ENCODE measurements at regions of chr15 and their contacts with region 1.

Region 1: GRCh38 chr15:60585743-60586708 is 107.1 kb upstream of the ICE2 start:
- DNase-seq: peak; percentile 36
- H3K4me3 ChIP-seq: no peak overlapping the region
- H3K27ac ChIP-seq: no peak overlapping the region
- H3K27me3 ChIP-seq: no peaks in the 10 kb centered on the region
- CTCF ChIP-seq: peak; percentile 94

Region 2: GRCh38 chr15:59879506-59880265 is 706.3 kb before region 1 on chr15:
- CTCF ChIA-PET with region 1: no interaction called
- POLR2A ChIA-PET with region 1: no interaction called
- DNase-seq: no peak
- H3K4me3 ChIP-seq: no peak overlapping the region
- H3K27ac ChIP-seq: no peak overlapping the region
- H3K27me3 ChIP-seq: peaks cover 5% of the 10 kb centered on the region
- CTCF ChIP-seq: no peak

Region 3: DNA sequence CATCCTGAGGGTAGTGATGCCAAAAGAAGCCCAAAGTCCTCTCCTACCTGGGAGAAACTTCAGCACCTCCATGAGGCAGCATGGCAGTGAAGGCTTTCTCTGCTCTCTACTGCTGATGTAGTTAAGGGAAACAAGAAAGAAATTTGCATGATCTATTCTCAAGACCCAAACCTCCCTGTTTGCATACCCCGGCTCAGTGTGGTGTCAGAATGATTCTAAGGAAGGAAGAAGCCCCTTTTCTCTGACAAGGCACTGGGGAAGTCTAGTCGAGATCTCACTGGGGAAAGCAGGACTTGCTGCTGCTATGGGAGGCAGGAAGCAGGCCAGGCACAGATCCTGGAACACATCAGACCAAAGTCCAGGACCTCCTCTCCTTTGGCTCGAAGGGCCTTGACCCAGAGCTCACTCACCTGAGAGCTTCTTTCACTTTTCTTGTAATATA is 17.7 kb before region 1 on chr15:
- CTCF ChIA-PET with region 1: interaction called, 17 read pairs
- POLR2A ChIA-PET with region 1: no interaction called
- DNase-seq: no peak
- H3K4me3 ChIP-seq: no peak overlapping the region
- H3K27ac ChIP-seq: no peak overlapping the region
- H3K27me3 ChIP-seq: no peaks in the 10 kb centered on the region
- CTCF ChIP-seq: no peak

Region 4: GRCh38 chr15:60635507-60636352 is 49.7 kb after region 1 on chr15:
- CTCF ChIA-PET with region 1: no interaction called
- POLR2A ChIA-PET with region 1: no interaction called
- DNase-seq: no peak
- H3K4me3 ChIP-seq: no peak overlapping the region
- H3K27ac ChIP-seq: no peak overlapping the region
- H3K27me3 ChIP-seq: peaks cover 4% of the 10 kb centered on the region
- CTCF ChIP-seq: no peak

Region 5: DNA sequence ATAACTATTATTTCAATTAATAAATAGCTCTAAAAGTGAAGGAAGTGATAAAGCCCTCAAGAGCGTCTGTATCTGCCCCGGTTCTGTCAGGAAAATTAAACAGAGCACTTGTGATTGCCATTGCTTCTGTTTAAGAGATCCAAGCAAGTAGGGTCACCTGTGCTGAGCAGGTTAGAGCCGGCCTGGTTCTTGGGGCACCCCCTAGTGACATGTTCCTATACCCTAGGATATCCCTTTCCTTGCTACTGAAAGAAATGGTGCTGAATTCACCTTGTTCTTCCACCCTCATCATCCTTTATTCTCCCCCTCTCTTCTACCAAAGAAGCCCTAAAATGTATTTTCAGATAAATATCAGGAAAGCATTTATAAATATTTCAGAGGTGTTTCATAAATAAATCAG is 319.6 kb after region 1 on chr15:
- CTCF ChIA-PET with region 1: interaction called, 11 read pairs
- POLR2A ChIA-PET with region 1: no interaction called
- DNase-seq: no peak
- H3K4me3 ChIP-seq: no peak overlapping the region
- H3K27ac ChIP-seq: no peak overlapping the region
- H3K27me3 ChIP-seq: peaks cover 5% of the 10 kb centered on the region
- CTCF ChIP-seq: 0 out of 2 replicates have a peak, but pooled peaks have one; percentile 8

Region 6: DNA sequence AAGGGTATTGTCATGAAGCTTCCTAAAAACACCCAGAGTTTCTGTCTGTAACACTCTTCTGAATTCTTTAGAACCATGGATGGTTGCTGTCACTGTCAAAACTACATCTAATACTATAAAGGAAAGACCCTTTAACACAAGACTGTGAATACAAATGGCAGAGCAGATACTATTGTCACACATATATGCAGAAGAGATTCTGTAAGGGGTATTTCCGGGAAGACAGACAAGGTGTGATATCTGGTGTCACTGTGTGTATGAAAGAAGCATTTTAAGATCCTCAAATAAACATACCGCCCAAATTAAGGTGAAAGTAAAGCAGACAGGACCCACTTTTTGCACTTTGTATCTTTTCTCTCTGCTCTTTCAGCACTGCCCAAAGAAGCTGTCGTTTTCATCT is 336.7 kb after region 1 on chr15:
- CTCF ChIA-PET with region 1: interaction called, 203 read pairs
- POLR2A ChIA-PET with region 1: no interaction called
- DNase-seq: no peak
- H3K4me3 ChIP-seq: no peak overlapping the region
- H3K27ac ChIP-seq: no peak overlapping the region
- H3K27me3 ChIP-seq: no peaks in the 10 kb centered on the region
- CTCF ChIP-seq: no peak

Region 7: GRCh38 chr15:61051569-61052031 is 465.6 kb after region 1 on chr15:
- CTCF ChIA-PET with region 1: interaction called, 21 read pairs
- POLR2A ChIA-PET with region 1: no interaction called
- DNase-seq: peak; percentile 26
- H3K4me3 ChIP-seq: no peak overlapping the region
- H3K27ac ChIP-seq: no peak overlapping the region
- H3K27me3 ChIP-seq: peaks cover 2% of the 10 kb centered on the region
- CTCF ChIP-seq: peak; percentile 79

Measured in AG04450 (cell line).